A673 (cell line): ENCODE measurements at regions of chr10 and their contacts with region 1.

Region 1: DNA sequence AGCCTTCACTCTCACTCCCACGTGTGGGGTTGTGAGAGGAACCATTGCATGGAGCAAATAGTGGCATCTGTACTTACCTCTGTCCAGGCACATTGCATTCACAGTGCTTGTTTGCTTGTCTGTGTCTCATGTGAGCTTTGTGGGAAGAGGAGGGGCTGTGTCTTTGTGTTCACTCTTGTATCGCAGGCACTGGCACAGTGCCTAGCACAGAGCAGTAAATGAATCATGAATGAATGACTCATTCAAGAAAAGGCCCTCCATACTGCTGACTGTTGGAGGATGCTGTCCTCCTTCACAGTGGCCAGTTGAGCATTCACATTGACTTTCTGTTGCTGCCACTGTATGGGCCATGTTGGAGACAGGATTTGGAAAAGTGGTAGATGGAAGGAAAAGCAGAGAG is 125.3 kb downstream of the SORCS3 start:
- DNase-seq: peak; percentile 5
- H3K4me3 ChIP-seq: no peak overlapping the region
- H3K27ac ChIP-seq: no peak overlapping the region
- H3K4me1 ChIP-seq: no peaks in the 10 kb centered on the region
- H3K27me3 ChIP-seq: peaks cover 55% of the 10 kb centered on the region
- CTCF ChIP-seq: no peak

Region 2: DNA sequence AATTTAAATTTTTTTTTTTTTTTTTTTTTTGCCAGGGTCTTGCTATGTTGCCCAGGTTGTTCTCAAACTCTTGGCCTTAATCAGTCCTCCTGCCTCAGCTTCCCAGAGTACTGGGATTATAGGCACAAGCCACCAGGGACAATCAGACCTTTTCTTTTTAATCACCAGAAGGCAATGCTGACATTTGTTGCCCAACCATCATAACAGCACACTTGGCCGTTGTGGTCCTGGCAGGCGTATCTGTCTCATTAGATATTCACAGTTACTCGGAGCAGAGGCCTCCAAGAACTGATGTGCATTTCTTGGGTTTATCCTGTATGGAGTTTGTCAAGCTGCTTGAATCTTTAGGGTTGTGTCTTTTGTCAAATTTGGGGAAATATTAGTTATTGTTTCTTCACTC is 25.2 kb before region 1 on chr10:
- CTCF ChIA-PET with region 1: interaction called, 17 read pairs
- POLR2A ChIA-PET with region 1: no interaction called
- intact Hi-C with region 1: no loop called
- DNase-seq: no peak
- H3K4me3 ChIP-seq: no peak overlapping the region
- H3K27ac ChIP-seq: no peak overlapping the region
- H3K4me1 ChIP-seq: no peaks in the 10 kb centered on the region
- H3K27me3 ChIP-seq: peaks cover 9% of the 10 kb centered on the region
- CTCF ChIP-seq: no peak